Mammary epithelial cell (primary cell): ENCODE measurements at regions of chr10 and their contacts with region 1.

Region 1: GRCh38 chr10:93859049-93859655 is 34.6 kb upstream of the SLC35G1 start:
- DNase-seq: no peak
- H3K4me3 ChIP-seq: no peak overlapping the region
- H3K27ac ChIP-seq: no peak overlapping the region
- H3K4me1 ChIP-seq: no peaks in the 10 kb centered on the region
- H3K27me3 ChIP-seq: peaks cover 3% of the 10 kb centered on the region
- CTCF ChIP-seq: peak; percentile 22 to 40

Region 2: GRCh38 chr10:93541402-93542357 is 317.5 kb before region 1 on chr10:
- CTCF ChIA-PET with region 1: no interaction called
- dilution Hi-C with region 1: no loop called
- in situ Hi-C with region 1: no loop called
- intact Hi-C with region 1: loop called (anchors 5 kb)
- DNase-seq: no peak
- H3K4me3 ChIP-seq: no peak overlapping the region
- H3K27ac ChIP-seq: no peak overlapping the region
- H3K4me1 ChIP-seq: no peaks in the 10 kb centered on the region
- H3K27me3 ChIP-seq: no peaks in the 10 kb centered on the region
- CTCF ChIP-seq: peak; percentile 69 to 75

Region 3: GRCh38 chr10:93745408-93746065 is 113.6 kb before region 1 on chr10:
- CTCF ChIA-PET with region 1: no interaction called
- dilution Hi-C with region 1: no loop called
- in situ Hi-C with region 1: no loop called
- intact Hi-C with region 1: no loop called
- DNase-seq: no peak
- H3K4me3 ChIP-seq: no peak overlapping the region
- H3K27ac ChIP-seq: no peak overlapping the region
- H3K4me1 ChIP-seq: peaks cover 3% of the 10 kb centered on the region
- H3K27me3 ChIP-seq: no peaks in the 10 kb centered on the region
- CTCF ChIP-seq: peak; percentile 33 to 42

Region 4: DNA sequence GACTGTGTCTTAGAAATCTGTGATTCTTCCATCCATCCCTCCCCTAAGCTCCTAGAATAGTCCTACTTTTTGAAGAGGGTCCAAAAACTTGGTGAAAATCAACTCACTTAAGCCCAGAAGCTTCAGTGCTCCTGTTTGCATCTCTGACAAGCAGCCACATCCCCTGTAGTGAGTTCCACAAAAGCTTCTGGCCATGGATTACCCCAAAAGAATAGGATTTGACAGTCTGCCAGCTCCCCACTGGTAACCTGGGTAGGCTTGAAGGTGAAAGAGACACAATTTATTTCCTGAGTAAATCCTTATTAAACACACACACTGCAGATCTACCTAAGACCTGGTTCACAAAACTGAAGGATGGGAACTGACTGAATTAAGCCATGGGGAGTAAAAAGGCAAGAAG is 55.0 kb before region 1 on chr10:
- CTCF ChIA-PET with region 1: no interaction called
- dilution Hi-C with region 1: loop called (anchors 5 kb)
- in situ Hi-C with region 1: no loop called
- intact Hi-C with region 1: no loop called
- DNase-seq: no peak
- H3K4me3 ChIP-seq: no peak overlapping the region
- H3K27ac ChIP-seq: no peak overlapping the region
- H3K4me1 ChIP-seq: no peaks in the 10 kb centered on the region
- H3K27me3 ChIP-seq: peaks cover 3% of the 10 kb centered on the region
- CTCF ChIP-seq: no peak

Region 5: DNA sequence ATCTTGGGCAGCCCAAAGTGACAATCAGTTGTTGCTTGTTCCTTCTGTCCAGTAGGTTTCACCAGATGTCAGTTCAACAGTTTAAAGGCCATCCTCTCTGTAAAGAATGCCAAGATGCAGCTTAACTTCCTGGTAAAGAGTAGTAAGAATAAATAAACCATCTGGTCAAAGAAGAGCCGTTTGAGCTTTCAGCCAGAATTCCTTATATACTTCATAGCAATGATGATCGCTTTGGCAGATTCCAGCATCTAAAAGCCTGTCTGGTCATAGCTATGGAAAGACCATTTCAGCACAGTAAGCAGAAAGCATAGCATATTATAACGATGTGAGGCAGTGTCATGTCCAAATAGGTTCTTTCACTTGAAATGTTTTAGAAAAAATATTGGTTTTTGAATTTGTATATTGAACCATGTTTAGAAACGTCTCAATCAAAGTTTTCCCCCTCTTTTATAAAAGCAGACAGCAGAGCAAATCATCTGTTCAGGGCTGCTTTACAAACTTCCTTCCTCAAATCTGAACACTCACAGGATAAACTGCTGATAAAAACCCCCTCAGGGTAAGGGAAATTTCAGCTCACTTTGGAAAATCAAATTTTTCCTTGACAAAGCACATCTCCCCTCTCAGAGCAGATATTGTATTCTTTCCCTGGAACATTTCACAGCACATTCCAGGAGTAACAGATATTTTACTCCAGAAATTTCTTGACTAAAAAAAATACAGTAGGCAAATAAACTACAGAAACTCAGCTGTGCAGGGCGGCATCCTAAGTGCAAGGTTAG is 319.5 kb after region 1 on chr10:
- CTCF ChIA-PET with region 1: no interaction called
- dilution Hi-C with region 1: no loop called
- in situ Hi-C with region 1: no loop called
- intact Hi-C with region 1: no loop called
- DNase-seq: no peak
- H3K4me3 ChIP-seq: no peak overlapping the region
- H3K27ac ChIP-seq: no peak overlapping the region
- H3K4me1 ChIP-seq: peaks cover 9% of the 10 kb centered on the region
- H3K27me3 ChIP-seq: peaks cover 2% of the 10 kb centered on the region
- CTCF ChIP-seq: no peak

Region 6: DNA sequence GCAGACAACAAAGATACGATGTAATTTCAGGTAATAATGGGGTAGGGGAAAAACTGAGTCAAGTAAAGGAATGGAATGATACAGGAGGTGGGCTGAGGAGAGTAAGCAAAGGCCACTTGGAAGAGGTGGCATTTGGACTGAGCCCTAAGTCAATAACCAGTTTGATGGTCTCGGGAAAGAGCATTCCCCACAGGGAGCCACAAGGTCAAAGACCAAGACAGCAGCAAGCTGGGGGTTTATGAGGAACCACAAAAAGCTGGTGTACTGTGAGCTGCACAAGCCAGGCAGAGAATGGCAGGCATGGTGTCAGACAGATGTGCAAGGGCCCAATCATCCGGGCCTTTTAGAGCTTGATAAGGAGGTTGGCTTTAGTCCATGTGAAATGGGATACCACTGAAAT is 404.9 kb after region 1 on chr10:
- CTCF ChIA-PET with region 1: no interaction called
- dilution Hi-C with region 1: no loop called
- in situ Hi-C with region 1: no loop called
- intact Hi-C with region 1: no loop called
- DNase-seq: no peak
- H3K4me3 ChIP-seq: no peak overlapping the region
- H3K27ac ChIP-seq: no peak overlapping the region
- H3K4me1 ChIP-seq: no peaks in the 10 kb centered on the region
- H3K27me3 ChIP-seq: no peaks in the 10 kb centered on the region
- CTCF ChIP-seq: no peak

Region 7: GRCh38 chr10:95071107-95071660 is 1212.0 kb after region 1 on chr10:
- CTCF ChIA-PET with region 1: no interaction called
- dilution Hi-C with region 1: no loop called
- in situ Hi-C with region 1: no loop called
- intact Hi-C with region 1: no loop called
- DNase-seq: no peak
- H3K4me3 ChIP-seq: no peak overlapping the region
- H3K27ac ChIP-seq: no peak overlapping the region
- H3K4me1 ChIP-seq: no peaks in the 10 kb centered on the region
- H3K27me3 ChIP-seq: no peaks in the 10 kb centered on the region
- CTCF ChIP-seq: no peak